Naive thymus-derived CD4-positive, alpha-beta T cell (primary cell): ENCODE measurements at regions of chr19 and their contacts with region 1.

Region 1: GRCh38 chr19:55632463-55632834 is 8.1 kb upstream of the ZNF784 start:
- DNase-seq: peak in 8 of 9 donors; percentile 81 to 93 (median 88)
- ATAC-seq: peak; percentile 76
- H3K4me3 ChIP-seq: no peak overlapping the region
- H3K4me3 Mint-ChIP-seq: peak overlapping the region; percentile 2 to 82 (median 34)
- H3K27ac ChIP-seq: peak overlapping the region; percentile 16
- H3K27ac Mint-ChIP-seq: peak overlapping the region; percentile 17 to 95 (median 71)
- H3K4me1 ChIP-seq: peaks cover 23 to 28% of the 10 kb centered on the region in 2 donors
- H3K4me1 Mint-ChIP-seq: peaks cover 39 to 54% (median 46%) of the 10 kb centered on the region in 7 donors
- H3K27me3 ChIP-seq: no peaks in the 10 kb centered on the region
- H3K27me3 Mint-ChIP-seq: peaks cover 0 to 12% (median 0%) of the 10 kb centered on the region in 5 donors

Region 2: DNA sequence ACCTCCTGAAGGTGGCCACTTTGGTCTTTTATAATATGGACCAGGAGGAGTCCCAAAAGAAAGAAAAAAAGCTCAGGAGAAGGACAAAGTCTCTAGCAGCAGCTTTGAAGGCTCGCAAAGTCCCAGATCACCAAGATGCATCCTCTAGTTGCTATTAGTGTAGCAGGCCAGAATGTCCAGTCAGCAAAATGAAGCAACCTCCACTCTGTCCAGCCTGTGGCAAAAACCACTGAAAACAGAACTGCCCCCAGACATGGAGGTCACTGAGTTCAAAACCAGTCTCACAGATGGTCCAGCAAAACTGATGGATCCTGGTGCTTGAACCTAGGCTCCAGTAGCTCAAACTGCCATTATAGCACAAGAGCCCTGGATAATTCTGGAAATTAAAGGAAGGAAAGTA is 959.2 kb before region 1 on chr19:
- CTCF ChIA-PET with region 1: no interaction called
- POLR2A ChIA-PET with region 1: no interaction called
- intact Hi-C with region 1: no loop called
- DNase-seq: no peak
- ATAC-seq: no peak
- H3K4me3 ChIP-seq: no peak overlapping the region
- H3K4me3 Mint-ChIP-seq: no peak overlapping the region
- H3K27ac ChIP-seq: no peak overlapping the region
- H3K27ac Mint-ChIP-seq: no peak overlapping the region
- H3K4me1 ChIP-seq: no peaks in the 10 kb centered on the region
- H3K4me1 Mint-ChIP-seq: peaks cover 0 to 3% (median 0%) of the 10 kb centered on the region in 7 donors
- H3K27me3 ChIP-seq: no peaks in the 10 kb centered on the region
- H3K27me3 Mint-ChIP-seq: peaks cover 6 to 34% (median 29%) of the 10 kb centered on the region in 5 donors

Region 3: DNA sequence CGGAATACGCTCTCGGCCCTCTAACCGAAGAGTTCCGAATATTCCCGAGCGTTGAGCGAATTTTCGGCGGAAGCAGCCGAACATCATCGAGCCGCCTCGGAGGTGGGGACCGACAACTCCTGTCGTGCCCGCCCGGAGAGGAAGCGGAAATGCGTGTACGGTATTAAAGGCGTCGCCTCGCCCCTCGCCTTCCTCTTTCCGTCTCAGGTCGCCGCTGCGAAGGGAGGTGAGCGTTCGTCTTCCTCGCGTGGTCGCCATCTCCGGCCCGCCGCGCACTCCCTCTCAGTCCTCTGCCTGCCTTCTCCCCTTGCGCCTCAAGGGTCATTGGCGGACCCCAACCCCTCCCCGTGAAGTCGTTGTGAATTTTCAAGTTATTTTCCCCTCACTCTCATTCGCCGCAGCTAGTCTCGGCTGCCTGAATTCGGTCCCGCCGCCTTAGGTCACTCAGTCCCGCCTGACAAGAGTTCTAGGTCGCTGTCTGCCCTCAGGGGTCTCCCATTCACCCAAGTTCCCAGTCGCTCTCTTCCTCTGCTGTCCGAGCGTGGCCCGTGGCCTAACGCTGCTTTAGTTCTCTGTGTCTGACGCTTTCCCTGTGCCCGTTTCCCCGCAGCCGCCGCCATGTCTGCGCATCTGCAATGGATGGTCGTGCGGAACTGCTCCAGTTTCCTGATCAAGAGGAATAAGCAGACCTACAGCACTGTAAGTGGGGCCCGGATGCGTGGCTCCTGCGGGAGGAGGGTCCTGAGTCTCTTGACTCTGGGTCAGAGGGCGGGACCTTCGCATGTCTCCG is 246.5 kb before region 1 on chr19 and contains the start of gene RPL28:
- CTCF ChIA-PET with region 1: no interaction called
- POLR2A ChIA-PET with region 1: no interaction called
- intact Hi-C with region 1: loop called in 1 of 2 experiments (anchors 10 kb)
- DNase-seq: peak; percentile 92 to 99 (median 99)
- ATAC-seq: peak; percentile 89
- H3K4me3 ChIP-seq: peak within 1 kb of the TSS; percentile 92
- H3K4me3 Mint-ChIP-seq: peak within 1 kb of the TSS; percentile 94 to 100 (median 100)
- H3K27ac ChIP-seq: peak within 1 kb of the TSS; percentile 91
- H3K27ac Mint-ChIP-seq: peak within 1 kb of the TSS; percentile 91 to 100 (median 99)
- H3K4me1 ChIP-seq: peaks cover 45 to 53% of the 10 kb centered on the region in 2 donors
- H3K4me1 Mint-ChIP-seq: peaks cover 41 to 79% (median 70%) of the 10 kb centered on the region in 7 donors
- H3K27me3 ChIP-seq: no peaks in the 10 kb centered on the region
- H3K27me3 Mint-ChIP-seq: peaks cover 0 to 3% (median 0%) of the 10 kb centered on the region in 5 donors
- total RNA-seq, gene RPL28: 2,549 to 3,799 (median 3,242) TPM

Region 4: GRCh38 chr19:55476100-55476775 is 156.2 kb before region 1 on chr19 and contains the start of gene ZNF628:
- CTCF ChIA-PET with region 1: interaction called, 4 read pairs
- POLR2A ChIA-PET with region 1: interaction called, 17 read pairs
- intact Hi-C with region 1: loop called in 1 of 2 experiments (anchors 2 kb)
- DNase-seq: peak; percentile 88 to 98 (median 96)
- ATAC-seq: peak; percentile 96
- H3K4me3 ChIP-seq: peak within 1 kb of the TSS; percentile 96
- H3K4me3 Mint-ChIP-seq: peak within 1 kb of the TSS; percentile 83 to 93 (median 90)
- H3K27ac ChIP-seq: peak within 1 kb of the TSS; percentile 90
- H3K27ac Mint-ChIP-seq: peak within 1 kb of the TSS; percentile 81 to 95 (median 92)
- H3K4me1 ChIP-seq: peaks cover 14 to 15% of the 10 kb centered on the region in 2 donors
- H3K4me1 Mint-ChIP-seq: peaks cover 15 to 41% (median 29%) of the 10 kb centered on the region in 7 donors
- H3K27me3 ChIP-seq: no peaks in the 10 kb centered on the region
- H3K27me3 Mint-ChIP-seq: no peaks in the 10 kb centered on the region
- total RNA-seq, gene ZNF628: 6.6 to 27.2 (median 9.0) TPM

Region 5: GRCh38 chr19:55580628-55581144 is 51.8 kb before region 1 on chr19 and contains the start of gene ZNF579:
- CTCF ChIA-PET with region 1: interaction called, 4 read pairs
- POLR2A ChIA-PET with region 1: interaction called, 14 read pairs
- intact Hi-C with region 1: loop called (anchors 2 kb)
- DNase-seq: peak in 8 of 9 donors; percentile 50 to 82 (median 64)
- ATAC-seq: peak; percentile 86
- H3K4me3 ChIP-seq: peak within 1 kb of the TSS; percentile 82
- H3K4me3 Mint-ChIP-seq: peak within 1 kb of the TSS; percentile 85 to 92 (median 88)
- H3K27ac ChIP-seq: peak within 1 kb of the TSS; percentile 87
- H3K27ac Mint-ChIP-seq: peak within 1 kb of the TSS; percentile 76 to 96 (median 88)
- H3K4me1 ChIP-seq: peaks cover 8 to 16% of the 10 kb centered on the region in 2 donors
- H3K4me1 Mint-ChIP-seq: peaks cover 21 to 35% (median 29%) of the 10 kb centered on the region in 7 donors
- H3K27me3 ChIP-seq: no peaks in the 10 kb centered on the region
- H3K27me3 Mint-ChIP-seq: peaks cover 0 to 16% (median 0%) of the 10 kb centered on the region in 5 donors
- total RNA-seq, gene ZNF579: 6.1 to 11.0 (median 7.8) TPM

Region 6: GRCh38 chr19:55653758-55654539 is 21.5 kb after region 1 on chr19:
- CTCF ChIA-PET with region 1: interaction called, 17 read pairs
- POLR2A ChIA-PET with region 1: interaction called, 154 read pairs
- intact Hi-C with region 1: loop called (anchors 1 kb)
- DNase-seq: peak; percentile 95 to 100 (median 100)
- ATAC-seq: peak; percentile 83
- H3K4me3 ChIP-seq: peak overlapping the region; percentile 98
- H3K4me3 Mint-ChIP-seq: peak overlapping the region; percentile 83 to 99 (median 96)
- H3K27ac ChIP-seq: peak overlapping the region; percentile 99
- H3K27ac Mint-ChIP-seq: peak overlapping the region; percentile 95 to 100 (median 99)
- H3K4me1 ChIP-seq: peaks cover 30 to 36% of the 10 kb centered on the region in 2 donors
- H3K4me1 Mint-ChIP-seq: peaks cover 29 to 55% (median 39%) of the 10 kb centered on the region in 7 donors
- H3K27me3 ChIP-seq: no peaks in the 10 kb centered on the region
- H3K27me3 Mint-ChIP-seq: peaks cover 0 to 2% (median 0%) of the 10 kb centered on the region in 5 donors

Region 7: DNA sequence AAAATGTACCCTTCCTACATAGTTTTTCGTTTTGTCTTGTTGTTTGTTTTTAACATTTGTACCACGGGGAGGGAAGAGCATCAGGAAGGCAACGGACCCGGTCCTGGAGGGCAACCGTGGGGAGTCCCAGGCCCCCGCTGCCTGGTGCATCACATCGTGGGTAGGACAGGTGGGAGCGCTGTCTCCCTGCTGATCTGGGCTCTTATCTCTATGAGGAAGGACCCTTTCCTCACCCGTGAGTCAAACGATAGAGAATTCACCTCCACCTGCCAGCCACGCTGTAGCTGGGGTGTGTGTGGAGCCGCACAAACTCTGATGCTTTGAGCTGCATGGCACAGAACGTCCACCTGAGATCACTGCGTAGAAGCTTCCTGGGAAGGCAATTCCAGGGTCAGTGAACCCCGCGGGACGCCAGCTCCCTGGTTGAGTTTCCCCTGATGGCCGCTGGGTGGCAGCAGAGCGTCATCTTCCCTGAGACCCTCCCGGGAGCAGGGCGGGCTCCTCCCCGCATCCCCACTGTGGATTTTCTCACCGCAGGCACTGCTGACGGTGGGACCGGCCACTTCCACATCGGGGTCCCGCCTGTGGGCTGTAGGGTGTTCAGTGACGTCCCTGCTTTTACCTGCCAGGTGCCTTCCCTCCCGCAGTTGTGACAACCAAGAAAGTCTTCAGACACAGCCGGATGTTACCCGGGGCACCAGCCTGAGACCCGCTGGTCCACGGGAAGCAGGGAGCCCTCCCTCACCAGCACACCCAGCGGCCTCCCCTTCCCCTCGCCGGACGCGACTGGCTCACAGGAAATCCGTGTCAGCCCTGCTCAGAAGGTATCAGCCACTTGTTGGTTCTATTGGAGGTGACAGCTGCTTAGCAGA is 433.9 kb after region 1 on chr19:
- CTCF ChIA-PET with region 1: no interaction called
- POLR2A ChIA-PET with region 1: no interaction called
- intact Hi-C with region 1: loop called in 1 of 2 experiments (anchors 5 kb)
- DNase-seq: peak; percentile 38 to 67 (median 58)
- ATAC-seq: peak; percentile 74
- H3K4me3 ChIP-seq: peak overlapping the region; percentile 38
- H3K4me3 Mint-ChIP-seq: peak overlapping the region; percentile 44 to 80 (median 74)
- H3K27ac ChIP-seq: no peak overlapping the region
- H3K27ac Mint-ChIP-seq: peak overlapping the region in 1 of 9 donors; percentile 17
- H3K4me1 ChIP-seq: no peaks in the 10 kb centered on the region
- H3K4me1 Mint-ChIP-seq: peaks cover 4 to 14% (median 12%) of the 10 kb centered on the region in 7 donors
- H3K27me3 ChIP-seq: no peaks in the 10 kb centered on the region
- H3K27me3 Mint-ChIP-seq: peaks cover 0 to 45% (median 38%) of the 10 kb centered on the region in 5 donors